PC-3 (cell line): ENCODE measurements at regions of chr1 and their contacts with region 1.

Region 1: DNA sequence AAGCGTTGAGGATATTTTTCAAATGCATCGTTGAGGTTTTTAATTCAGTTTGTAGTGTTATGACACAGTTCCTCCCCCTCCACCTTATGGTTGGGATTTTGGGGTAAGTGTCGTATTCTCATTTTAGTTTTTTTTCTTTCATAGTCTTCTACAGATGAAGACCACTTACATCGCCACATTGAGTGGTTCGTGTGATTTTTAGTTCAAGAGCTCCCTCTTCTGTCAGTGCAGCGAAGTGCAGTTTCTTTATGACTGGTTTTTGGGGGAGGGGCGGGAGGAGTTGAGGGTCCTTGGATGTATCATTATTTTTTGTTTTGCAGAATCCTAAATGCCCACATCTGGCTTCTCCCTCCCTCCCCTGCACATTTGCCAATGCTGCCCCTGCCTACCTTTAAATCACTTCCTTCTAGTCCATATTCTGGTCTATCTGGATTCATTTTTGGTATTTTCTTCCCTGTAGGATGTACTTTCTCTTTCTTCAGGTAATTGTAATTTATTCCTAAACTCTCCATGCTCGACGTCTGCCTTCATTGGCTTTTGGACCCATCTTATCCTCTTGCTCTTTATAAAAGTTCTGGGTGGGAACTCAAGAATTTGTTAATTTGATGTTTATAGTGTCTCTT is 433.1 kb downstream of the CAMTA1 start:
- DNase-seq: peak; percentile 69
- ATAC-seq: no peak
- H3K4me3 ChIP-seq: no peak overlapping the region
- H3K27ac ChIP-seq: no peak overlapping the region
- H3K4me1 ChIP-seq: peaks cover 3% of the 10 kb centered on the region
- H3K27me3 ChIP-seq: peaks cover 17% of the 10 kb centered on the region
- CTCF ChIP-seq: peak; percentile 93

Region 2: GRCh38 chr1:6794164-6794563 is 424.2 kb before region 1 on chr1:
- CTCF ChIA-PET with region 1: interaction called, 3 read pairs
- POLR2A ChIA-PET with region 1: no interaction called
- intact Hi-C with region 1: loop called (anchors 1 kb)
- DNase-seq: peak; percentile 69
- ATAC-seq: no peak
- H3K4me3 ChIP-seq: no peak overlapping the region
- H3K27ac ChIP-seq: no peak overlapping the region
- H3K4me1 ChIP-seq: no peaks in the 10 kb centered on the region
- H3K27me3 ChIP-seq: no peaks in the 10 kb centered on the region
- CTCF ChIP-seq: peak; percentile 83

Region 3: GRCh38 chr1:7042322-7043190 is 175.8 kb before region 1 on chr1:
- CTCF ChIA-PET with region 1: interaction called, 5 read pairs
- POLR2A ChIA-PET with region 1: no interaction called
- intact Hi-C with region 1: loop called (anchors 1 kb)
- DNase-seq: peak; percentile 58
- ATAC-seq: peak; percentile 49
- H3K4me3 ChIP-seq: no peak overlapping the region
- H3K27ac ChIP-seq: no peak overlapping the region
- H3K4me1 ChIP-seq: peaks cover 2% of the 10 kb centered on the region; the same call in 1 of the 2 replicates
- H3K27me3 ChIP-seq: peaks cover 42% of the 10 kb centered on the region
- CTCF ChIP-seq: peak; percentile 74

Region 4: GRCh38 chr1:7255303-7256058 is 37.2 kb after region 1 on chr1:
- CTCF ChIA-PET with region 1: no interaction called
- POLR2A ChIA-PET with region 1: no interaction called
- intact Hi-C with region 1: no loop called
- DNase-seq: peak; percentile 56
- ATAC-seq: peak; percentile 60; the same call in 1 of the 2 replicates
- H3K4me3 ChIP-seq: no peak overlapping the region
- H3K27ac ChIP-seq: peak overlapping the region; percentile 39; the same call in 1 of the 2 replicates
- H3K4me1 ChIP-seq: peaks cover 7% of the 10 kb centered on the region; the same call in 1 of the 2 replicates
- H3K27me3 ChIP-seq: peaks cover 7% of the 10 kb centered on the region; the same call in 1 of the 2 replicates
- CTCF ChIP-seq: no peak

Region 5: GRCh38 chr1:7482772-7483495 is 264.6 kb after region 1 on chr1:
- CTCF ChIA-PET with region 1: interaction called, 13 read pairs
- POLR2A ChIA-PET with region 1: no interaction called
- intact Hi-C with region 1: no loop called
- DNase-seq: no peak
- ATAC-seq: no peak
- H3K4me3 ChIP-seq: no peak overlapping the region
- H3K27ac ChIP-seq: no peak overlapping the region
- H3K4me1 ChIP-seq: no peaks in the 10 kb centered on the region
- H3K27me3 ChIP-seq: peaks cover 54% of the 10 kb centered on the region
- CTCF ChIP-seq: no peak

Region 6: GRCh38 chr1:7646981-7647901 is 428.9 kb after region 1 on chr1:
- CTCF ChIA-PET with region 1: no interaction called
- POLR2A ChIA-PET with region 1: no interaction called
- intact Hi-C with region 1: loop called (anchors 5 kb)
- DNase-seq: peak; percentile 70
- ATAC-seq: peak; percentile 84
- H3K4me3 ChIP-seq: no peak overlapping the region
- H3K27ac ChIP-seq: no peak overlapping the region
- H3K4me1 ChIP-seq: no peaks in the 10 kb centered on the region
- H3K27me3 ChIP-seq: peaks cover 21% of the 10 kb centered on the region
- CTCF ChIP-seq: peak; percentile 92